ENCODE measurements at regions of chr6 and their contacts with region 1.

Region 1: GRCh38 chr6:43926634-43927524 is 156.9 kb downstream of the VEGFA start:
- DNase-seq: peak in 1 of 2 experiments; percentile 62
- H3K4me3 ChIP-seq: no peak overlapping the region
- H3K27ac ChIP-seq: no peak overlapping the region; the same call in 1 of the 2 replicates
- H3K4me1 ChIP-seq: peaks cover 0 to 10% (median 5%) of the 10 kb centered on the region in 4 experiments; a peak in 5 of 7 replicates
- H3K27me3 ChIP-seq: no peaks in the 10 kb centered on the region
- CTCF ChIP-seq: peak in 1 of 3 experiments; percentile 6; a peak in 1 of 4 replicates
- EP300 ChIP-seq: peak in 1 of 2 experiments; percentile 23; a peak in 1 of 3 replicates
- POLR2A ChIP-seq: no peak; a peak in 1 of 3 replicates
- RAD21 ChIP-seq: no peak

Region 2: DNA sequence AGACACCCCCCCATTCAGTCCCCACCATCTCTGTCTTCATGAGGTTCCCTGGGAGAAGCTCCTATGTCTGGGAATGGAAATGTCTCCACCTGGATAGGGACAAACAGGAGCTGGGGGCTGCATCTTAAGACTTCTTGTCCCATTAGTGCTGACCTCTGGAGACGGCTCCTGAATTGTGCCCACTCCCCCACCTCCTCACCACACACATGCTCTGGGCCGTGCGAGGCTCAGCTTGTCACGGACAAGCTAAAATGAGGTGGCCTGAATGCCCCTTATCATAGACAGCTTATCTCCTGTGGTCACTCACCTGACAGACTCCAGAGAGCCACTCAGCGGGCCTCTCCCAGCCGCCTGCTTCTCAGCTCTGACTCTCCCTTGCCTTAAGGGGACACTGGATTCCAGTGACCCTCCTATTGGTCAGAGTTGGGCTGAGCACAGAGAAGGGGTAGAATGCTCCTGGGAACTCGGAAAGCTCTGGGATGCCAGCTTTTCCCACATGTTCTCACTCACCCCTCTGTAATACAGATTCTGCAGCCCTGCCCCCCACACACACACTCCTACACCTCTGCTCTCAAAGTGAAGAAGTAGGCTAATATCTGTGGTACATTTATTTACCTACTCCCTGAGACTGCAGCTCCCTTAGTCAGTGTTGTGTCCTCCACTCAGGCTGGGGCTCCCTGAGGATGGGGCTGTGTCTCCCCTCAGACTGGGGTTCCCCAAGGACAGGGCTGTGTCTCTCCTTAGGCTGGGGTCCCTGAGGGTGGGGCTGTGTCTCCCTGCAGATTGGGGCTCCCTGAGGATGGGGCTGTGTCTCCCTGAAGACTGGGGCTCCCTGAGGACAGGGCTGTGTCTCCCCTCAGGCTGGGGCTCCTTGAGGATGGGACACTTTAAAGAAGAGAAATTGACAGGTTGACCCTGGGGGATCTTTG is 10.6 kb after region 1 on chr6:
- CTCF ChIA-PET with region 1: interaction called, 7 read pairs
- POLR2A ChIA-PET with region 1: interaction called, 28 read pairs
- DNase-seq: no peak
- H3K4me3 ChIP-seq: no peak overlapping the region
- H3K27ac ChIP-seq: no peak overlapping the region
- H3K4me1 ChIP-seq: peaks cover 0 to 16% (median under 1%) of the 10 kb centered on the region in 4 experiments; a peak in 4 of 7 replicates
- H3K27me3 ChIP-seq: no peaks in the 10 kb centered on the region; a peak in 1 of 7 replicates
- CTCF ChIP-seq: no peak
- EP300 ChIP-seq: no peak
- POLR2A ChIP-seq: no peak
- RAD21 ChIP-seq: no peak